MCF 10A (cell line): ENCODE measurements at regions of chr2 and their contacts with region 1.

Region 1: DNA sequence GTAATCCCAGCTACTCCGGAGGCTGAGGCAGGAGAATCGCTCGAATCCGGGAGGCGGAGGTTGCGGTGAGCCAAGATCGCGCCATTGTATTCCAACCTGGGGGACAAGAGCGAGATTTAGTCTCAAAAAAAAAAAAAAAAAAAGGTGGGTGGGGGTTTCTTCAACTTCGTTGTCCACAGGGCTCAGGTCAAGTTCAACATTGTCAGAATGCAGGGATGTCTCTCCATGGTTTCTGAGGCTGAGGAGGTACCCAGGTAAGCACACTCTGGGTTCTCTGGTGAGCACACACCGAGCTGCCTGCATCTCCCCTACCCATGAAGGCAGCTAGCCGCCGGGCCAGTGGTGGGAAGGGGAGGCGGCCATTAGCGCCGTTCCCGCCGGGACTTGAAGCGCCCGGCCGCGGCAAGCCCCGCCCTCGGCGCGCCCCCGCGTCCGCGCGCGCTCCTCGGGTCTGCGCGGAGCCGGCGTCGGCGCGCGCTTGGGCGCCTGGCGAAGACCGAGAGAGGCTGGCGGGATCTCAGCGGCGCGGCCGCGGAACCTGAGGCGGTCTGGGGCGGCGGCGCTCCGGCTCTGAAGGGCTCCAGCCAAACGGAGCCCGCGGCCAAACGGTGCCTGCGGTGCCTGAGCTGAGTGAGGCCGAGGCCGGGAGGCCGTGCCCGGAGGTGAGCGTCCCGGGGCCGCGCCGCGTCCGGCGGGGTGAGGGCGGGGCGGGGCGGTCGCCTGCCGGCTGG is at the start of gene UBXN2A:
- DNase-seq: peak; percentile 75
- H3K4me3 Mint-ChIP-seq: peak within 1 kb of the TSS; percentile 76
- H3K27ac Mint-ChIP-seq: peak within 1 kb of the TSS; percentile 30
- H3K4me1 Mint-ChIP-seq: peaks cover 25% of the 10 kb centered on the region
- H3K27me3 Mint-ChIP-seq: no peaks in the 10 kb centered on the region
- CTCF ChIP-seq: no peak
- total RNA-seq, gene UBXN2A: 13.0 and 13.6 TPM in 2 replicates

Region 2: DNA sequence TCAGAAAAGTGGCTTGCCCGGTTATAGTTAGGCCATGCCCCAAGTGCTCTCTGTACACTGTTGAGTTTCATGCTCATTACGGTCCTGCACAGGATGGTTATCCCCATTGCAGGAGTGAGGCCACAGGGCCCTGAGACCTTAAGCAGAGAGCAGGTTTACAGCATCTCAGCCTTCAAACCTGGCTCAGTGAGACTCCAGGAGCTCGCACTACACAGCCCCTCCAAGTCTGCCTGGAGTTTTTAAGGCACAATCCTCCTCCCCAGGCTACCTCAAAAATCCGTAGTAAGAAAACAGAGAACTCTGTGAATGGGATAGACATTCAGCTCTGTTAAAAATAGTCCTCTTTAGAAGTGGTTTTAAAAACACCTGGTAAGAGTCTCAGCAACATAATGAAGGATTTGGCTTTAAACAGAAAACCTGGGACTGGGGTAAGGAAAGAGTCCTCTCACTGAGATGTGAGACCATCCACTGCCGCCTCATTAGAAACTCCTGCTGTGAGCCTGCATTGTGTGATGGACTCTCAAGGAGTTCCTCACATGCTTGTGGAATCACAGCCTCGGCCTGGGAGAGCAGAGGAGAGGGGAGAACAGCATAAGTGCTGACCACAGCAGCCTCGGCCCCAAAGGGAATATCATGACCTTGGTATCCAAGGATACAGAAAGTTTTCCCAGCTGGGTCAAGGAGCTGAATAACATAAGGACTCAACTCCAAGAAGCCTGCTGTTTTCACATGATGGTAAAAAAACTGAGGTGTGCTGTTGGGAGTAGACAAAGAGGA is 228.0 kb before region 1 on chr2:
- CTCF ChIA-PET with region 1: no interaction called
- POLR2A ChIA-PET with region 1: no interaction called
- intact Hi-C with region 1: no loop called
- DNase-seq: no peak
- H3K4me3 Mint-ChIP-seq: no peak overlapping the region
- H3K27ac Mint-ChIP-seq: no peak overlapping the region
- H3K4me1 Mint-ChIP-seq: no peaks in the 10 kb centered on the region
- H3K27me3 Mint-ChIP-seq: no peaks in the 10 kb centered on the region
- CTCF ChIP-seq: no peak

Region 3: DNA sequence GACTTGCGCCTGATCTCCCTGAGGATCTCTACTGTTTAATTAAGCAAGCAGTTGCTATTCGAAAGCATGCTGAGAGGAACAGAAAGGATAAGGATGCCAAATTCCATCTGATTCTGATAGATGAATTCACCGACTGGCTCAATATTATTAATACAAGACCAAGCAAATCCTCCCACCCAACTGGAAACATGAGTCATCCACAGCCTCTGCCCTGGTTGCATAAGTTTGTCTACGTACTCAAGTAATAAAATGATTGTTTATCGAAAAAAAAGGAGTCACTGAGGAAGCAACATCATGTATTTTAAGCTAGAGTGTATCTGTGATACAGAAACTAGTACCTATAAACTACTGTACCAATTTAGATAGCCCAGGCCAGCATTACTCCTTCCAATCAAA is 39.2 kb before region 1 on chr2:
- CTCF ChIA-PET with region 1: no interaction called
- POLR2A ChIA-PET with region 1: interaction called, 4 read pairs
- intact Hi-C with region 1: loop called (anchors 1 kb)
- DNase-seq: peak; percentile 77
- H3K4me3 Mint-ChIP-seq: no peak overlapping the region
- H3K27ac Mint-ChIP-seq: peak overlapping the region; percentile 49
- H3K4me1 Mint-ChIP-seq: peaks cover 24% of the 10 kb centered on the region
- H3K27me3 Mint-ChIP-seq: no peaks in the 10 kb centered on the region
- CTCF ChIP-seq: no peak